Panc1 (cell line): ENCODE measurements at regions of chr17 and their contacts with region 1.

Region 1: DNA sequence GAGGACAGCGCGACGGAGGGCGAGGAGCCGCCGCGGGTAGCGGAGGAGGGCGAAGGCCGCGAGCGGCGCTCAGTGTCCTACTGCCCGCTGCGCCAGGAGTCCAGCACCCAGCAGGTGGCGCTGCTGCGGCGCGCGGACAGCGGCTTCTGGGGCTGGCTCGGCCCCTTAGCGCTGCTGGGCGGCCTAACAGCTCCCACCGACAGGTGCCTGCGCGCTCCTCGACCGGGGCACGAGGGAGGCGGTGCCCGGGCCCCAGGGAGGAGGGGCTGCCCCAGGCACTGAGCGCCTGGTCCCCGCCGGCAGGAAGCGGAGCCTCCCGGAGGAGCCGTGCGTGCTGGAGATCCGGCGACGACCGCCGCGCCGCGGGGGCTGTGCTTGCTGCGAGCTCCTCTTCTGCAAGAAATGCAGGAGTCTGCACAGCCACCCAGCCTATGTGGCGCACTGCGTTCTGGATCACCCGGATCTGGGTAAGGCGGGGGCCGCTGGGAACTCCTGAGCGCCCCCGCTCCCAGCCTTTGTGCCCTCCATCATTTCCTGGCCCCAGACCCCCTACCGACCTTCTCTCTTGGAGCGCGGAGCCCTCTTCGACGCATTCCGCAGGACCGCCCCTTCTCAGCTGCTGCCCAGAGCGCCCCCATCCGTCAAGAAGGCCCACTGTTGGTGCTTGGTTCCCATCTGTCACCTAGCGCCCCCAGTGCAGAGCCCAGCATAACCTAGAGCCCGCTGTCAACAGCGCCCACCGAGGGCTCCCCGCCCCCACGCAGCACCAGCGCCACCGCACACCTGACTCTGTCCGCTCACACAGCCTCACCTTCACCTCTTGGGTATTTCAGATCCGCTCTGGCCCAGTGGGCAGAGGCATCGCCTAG is 3.7 kb downstream of the C17orf50 start:
- DNase-seq: peak; percentile 43
- ATAC-seq: peak; percentile 98
- H3K4me3 ChIP-seq: peak overlapping the region; percentile 46 to 64
- H3K27ac ChIP-seq: no peak overlapping the region
- H3K4me1 ChIP-seq: peaks cover 4% of the 10 kb centered on the region; the same call in 1 of the 2 replicates
- H3K27me3 ChIP-seq: peaks cover 3% of the 10 kb centered on the region; the same call in 1 of the 2 replicates
- CTCF ChIP-seq: peak; percentile 97

Region 2: GRCh38 chr17:35496470-35497290 is 267.7 kb before region 1 on chr17:
- CTCF ChIA-PET with region 1: interaction called, 10 read pairs
- POLR2A ChIA-PET with region 1: no interaction called
- in situ Hi-C with region 1: no loop called
- intact Hi-C with region 1: no loop called
- DNase-seq: no peak
- ATAC-seq: no peak
- H3K4me3 ChIP-seq: no peak overlapping the region
- H3K27ac ChIP-seq: no peak overlapping the region
- H3K4me1 ChIP-seq: no peaks in the 10 kb centered on the region
- H3K27me3 ChIP-seq: peaks cover 2% of the 10 kb centered on the region; the same call in 1 of the 2 replicates
- CTCF ChIP-seq: no peak

Region 3: DNA sequence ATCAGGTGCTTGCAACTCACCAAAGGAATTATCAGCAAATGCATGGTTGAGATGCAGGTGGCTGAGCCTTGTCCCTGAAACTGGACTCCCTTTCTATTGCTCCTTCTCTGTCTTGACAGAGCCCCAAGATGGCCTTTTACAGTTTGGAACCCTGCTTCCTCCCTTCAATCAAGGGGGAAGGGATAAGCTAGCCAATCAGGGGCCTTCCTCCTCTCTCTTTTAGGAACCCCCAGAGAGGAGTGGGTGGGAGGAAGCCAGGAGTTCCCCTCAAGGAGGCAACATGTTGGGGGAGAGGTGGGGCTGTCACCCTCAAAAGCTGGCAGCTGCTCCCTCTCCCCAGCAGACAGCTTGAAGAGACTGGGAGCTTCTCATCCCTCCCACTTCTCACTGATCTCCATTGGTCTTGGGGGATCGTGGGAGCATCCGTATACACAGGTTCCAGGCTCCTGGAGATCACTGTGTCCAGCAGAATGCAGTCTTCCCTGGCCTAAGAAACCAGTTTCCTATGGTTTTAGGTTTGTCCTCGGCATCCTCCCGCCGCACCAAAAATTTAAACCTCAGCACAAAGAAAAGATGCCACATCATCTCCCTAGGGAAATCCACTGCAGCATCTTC is 25.7 kb before region 1 on chr17:
- CTCF ChIA-PET with region 1: no interaction called
- POLR2A ChIA-PET with region 1: no interaction called
- in situ Hi-C with region 1: no loop called
- intact Hi-C with region 1: no loop called
- DNase-seq: no peak
- ATAC-seq: no peak
- H3K4me3 ChIP-seq: no peak overlapping the region
- H3K27ac ChIP-seq: no peak overlapping the region
- H3K4me1 ChIP-seq: no peaks in the 10 kb centered on the region; the same call in 1 of the 2 replicates
- H3K27me3 ChIP-seq: no peaks in the 10 kb centered on the region
- CTCF ChIP-seq: no peak

Region 4: DNA sequence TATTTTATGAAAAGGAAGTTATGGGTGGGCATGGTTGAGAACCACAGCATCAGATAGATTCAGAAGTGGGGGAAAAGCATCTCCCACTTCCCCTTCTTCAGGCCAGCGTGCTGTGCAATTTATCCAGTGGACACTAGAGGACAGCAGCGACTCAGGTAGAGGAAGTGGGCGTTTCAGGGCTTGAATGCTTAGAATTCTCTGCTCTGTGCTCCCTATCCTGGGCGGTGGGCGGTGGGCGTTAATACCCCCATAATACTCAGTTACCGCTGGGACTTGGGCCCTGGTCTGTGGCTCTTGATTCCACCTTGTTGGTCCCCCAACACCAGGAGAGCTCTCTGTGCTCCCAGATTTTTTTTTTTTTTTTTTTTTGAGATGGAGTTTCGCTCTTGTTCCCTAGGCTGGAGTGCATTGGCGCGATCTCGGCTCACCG is 182.8 kb after region 1 on chr17:
- CTCF ChIA-PET with region 1: no interaction called
- POLR2A ChIA-PET with region 1: no interaction called
- in situ Hi-C with region 1: no loop called
- intact Hi-C with region 1: no loop called
- DNase-seq: peak; percentile 64
- ATAC-seq: peak; percentile 90
- H3K4me3 ChIP-seq: peak overlapping the region; percentile 38 to 57
- H3K27ac ChIP-seq: no peak overlapping the region
- H3K4me1 ChIP-seq: no peaks in the 10 kb centered on the region
- H3K27me3 ChIP-seq: no peaks in the 10 kb centered on the region
- CTCF ChIP-seq: peak; percentile 98